ENCODE measurements at regions of chr5 and their contacts with region 1.

Region 1: DNA sequence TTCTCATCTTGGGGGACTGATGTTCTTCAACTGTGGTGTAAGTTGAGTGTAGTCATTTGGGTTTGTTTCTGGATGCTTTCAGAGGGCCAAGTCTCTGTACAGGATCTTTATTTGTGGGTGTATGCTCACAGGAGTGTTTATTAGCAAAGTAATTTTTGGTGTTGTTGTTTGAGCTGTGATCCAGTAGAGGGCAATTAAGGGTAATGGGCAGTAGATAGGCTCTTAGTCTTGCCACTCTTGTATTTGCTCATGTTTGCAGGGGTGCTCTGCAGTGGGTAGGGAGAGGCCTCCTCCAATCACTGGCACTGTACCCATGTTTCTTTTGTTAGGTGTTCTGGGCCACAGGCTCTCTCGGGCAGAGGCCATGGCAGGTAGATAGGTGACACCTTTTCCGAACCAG is 45.9 kb upstream of the ITGA2 start:
- DNase-seq: peak; percentile 31
- H3K4me3 ChIP-seq: no peak overlapping the region
- H3K27ac ChIP-seq: no peak overlapping the region
- H3K4me1 ChIP-seq: peaks cover 26% of the 10 kb centered on the region
- H3K27me3 ChIP-seq: no peaks in the 10 kb centered on the region
- CTCF ChIP-seq: peak; percentile 23 to 44
- POLR2A ChIP-seq: no peak

Region 2: DNA sequence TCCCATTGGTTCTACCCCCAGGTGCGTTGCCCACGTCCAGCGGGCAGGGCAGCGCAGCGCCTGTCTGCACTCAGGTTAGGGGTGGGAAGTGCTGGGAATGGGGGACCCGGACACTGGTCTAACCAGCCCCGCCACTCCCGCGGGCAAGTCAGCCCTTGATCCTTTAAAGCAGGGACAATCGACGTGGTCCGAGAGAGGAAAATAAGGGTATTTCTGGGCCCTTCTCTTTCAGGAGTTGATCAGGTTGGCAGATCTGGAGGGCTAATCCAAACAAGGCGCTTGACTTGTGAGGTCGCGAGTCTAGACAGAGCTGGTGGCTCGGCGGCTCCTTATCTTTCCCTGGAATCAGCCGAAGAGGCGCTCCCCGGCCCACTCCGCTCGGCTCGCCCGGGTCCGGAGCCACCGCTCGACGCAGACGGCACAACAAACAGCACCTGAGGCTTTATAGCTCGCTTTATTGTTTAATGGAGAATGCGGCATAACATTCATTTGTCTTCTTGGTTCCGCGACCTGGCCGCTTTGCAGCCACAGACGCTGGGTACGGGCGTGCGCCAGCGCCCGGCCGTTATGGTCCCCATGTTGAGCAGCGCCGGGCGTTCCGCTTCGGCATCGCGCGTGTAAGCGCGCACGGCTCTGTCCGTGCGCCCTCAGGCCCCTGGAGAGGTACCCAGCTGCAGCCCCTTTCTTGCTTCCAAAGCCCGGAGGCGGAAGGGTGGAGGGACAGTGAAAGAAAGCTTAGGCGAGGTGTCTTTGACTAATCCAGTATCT is 1544.2 kb before region 1 on chr5:
- CTCF ChIA-PET with region 1: no interaction called
- POLR2A ChIA-PET with region 1: no interaction called
- dilution Hi-C with region 1: no loop called
- intact Hi-C with region 1: no loop called
- DNase-seq: no peak
- H3K4me3 ChIP-seq: peak overlapping the region in 1 of 3 experiments; percentile 7
- H3K27ac ChIP-seq: no peak overlapping the region
- H3K4me1 ChIP-seq: no peaks in the 10 kb centered on the region
- H3K27me3 ChIP-seq: peaks cover 21 to 29% of the 10 kb centered on the region in 2 experiments
- CTCF ChIP-seq: no peak
- POLR2A ChIP-seq: no peak

Region 3: DNA sequence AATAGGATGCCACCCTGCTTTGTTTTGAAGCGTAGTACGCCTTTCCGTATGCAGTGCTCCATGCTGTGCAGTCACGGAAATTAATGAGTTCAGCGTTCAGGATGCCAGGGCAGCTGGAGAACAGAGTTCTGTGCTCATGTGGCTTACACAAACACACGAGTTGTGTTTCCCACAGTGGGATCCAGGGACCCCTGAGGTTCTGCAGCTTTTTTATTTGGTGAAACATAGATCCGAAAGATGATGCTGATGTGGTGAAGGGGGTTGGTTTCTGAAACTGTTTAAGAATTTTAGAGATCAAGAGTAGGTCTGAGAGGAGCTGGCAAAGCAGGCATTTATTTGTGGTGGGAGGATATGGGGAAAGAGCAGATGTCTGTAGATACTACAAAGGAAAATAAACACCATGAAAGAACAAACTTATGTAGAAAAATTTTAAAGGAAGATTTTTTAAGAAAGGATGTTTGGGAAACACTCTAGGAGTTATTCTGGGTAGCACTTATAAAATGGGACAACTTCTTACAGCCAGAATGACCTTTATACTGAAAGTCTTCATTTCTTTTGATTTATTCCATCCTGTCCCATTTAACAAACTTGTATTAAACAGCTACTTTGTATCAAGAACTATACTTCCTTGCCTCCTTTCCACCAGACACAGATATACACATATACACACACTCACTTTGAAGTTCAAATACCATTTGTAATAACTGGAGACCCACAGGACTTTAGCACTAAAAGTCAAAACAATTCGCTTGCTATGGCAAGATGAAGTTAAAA is 102.8 kb before region 1 on chr5:
- CTCF ChIA-PET with region 1: no interaction called
- POLR2A ChIA-PET with region 1: no interaction called
- dilution Hi-C with region 1: no loop called
- intact Hi-C with region 1: no loop called
- DNase-seq: peak; percentile 89
- H3K4me3 ChIP-seq: no peak overlapping the region
- H3K27ac ChIP-seq: no peak overlapping the region
- H3K4me1 ChIP-seq: peaks cover 26% of the 10 kb centered on the region
- H3K27me3 ChIP-seq: no peaks in the 10 kb centered on the region
- CTCF ChIP-seq: no peak
- POLR2A ChIP-seq: no peak

Region 4: DNA sequence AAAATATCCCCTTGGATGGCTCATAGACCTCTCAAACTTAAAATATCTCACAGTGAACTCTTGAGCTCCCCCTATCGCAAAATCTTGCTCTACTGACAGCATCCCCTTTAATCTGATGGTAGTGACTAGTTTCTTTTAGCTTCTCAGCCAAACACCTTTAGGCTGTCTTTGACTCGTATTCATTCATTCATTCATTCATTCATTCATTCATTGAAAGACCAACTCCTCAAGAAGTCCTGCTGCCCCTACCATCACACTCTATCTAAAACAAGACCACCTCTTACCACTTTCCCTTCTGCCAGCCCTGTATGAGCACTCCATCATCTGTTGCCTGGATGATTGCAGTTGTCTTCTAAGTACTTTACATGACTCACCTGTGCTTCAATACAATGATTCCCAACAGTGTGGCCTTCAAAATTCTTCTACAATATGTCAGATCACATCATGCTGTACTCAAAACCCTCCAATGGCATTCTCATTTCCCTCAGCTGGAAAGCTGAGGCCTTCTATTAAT is 92.6 kb after region 1 on chr5:
- CTCF ChIA-PET with region 1: interaction called, 46 read pairs
- POLR2A ChIA-PET with region 1: no interaction called
- dilution Hi-C with region 1: no loop called
- intact Hi-C with region 1: loop called (anchors 1 kb)
- DNase-seq: peak; percentile 28
- H3K4me3 ChIP-seq: no peak overlapping the region
- H3K27ac ChIP-seq: no peak overlapping the region
- H3K4me1 ChIP-seq: peaks cover 52% of the 10 kb centered on the region
- H3K27me3 ChIP-seq: no peaks in the 10 kb centered on the region
- CTCF ChIP-seq: peak; percentile 20 to 31
- POLR2A ChIP-seq: no peak

Region 5: DNA sequence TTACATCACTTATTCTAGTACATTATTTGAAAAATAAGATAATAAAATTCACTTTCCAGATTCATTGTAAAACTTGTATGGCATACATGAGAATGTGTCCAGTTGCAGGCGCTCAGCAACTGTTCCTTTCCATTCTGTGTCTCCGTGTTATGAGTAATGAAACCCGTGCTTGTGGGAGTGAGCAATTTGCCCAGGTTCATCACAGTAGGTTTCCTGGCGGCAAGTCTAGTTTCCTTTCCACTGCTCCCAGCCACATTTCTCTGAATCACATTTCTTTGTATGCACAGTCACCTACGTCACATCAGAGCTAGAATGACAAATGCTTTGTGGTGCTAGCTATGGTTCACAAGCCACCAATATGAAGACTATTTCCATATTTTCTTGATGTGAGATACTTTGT is 126.3 kb after region 1 on chr5:
- CTCF ChIA-PET with region 1: interaction called, 50 read pairs
- POLR2A ChIA-PET with region 1: no interaction called
- dilution Hi-C with region 1: no loop called
- intact Hi-C with region 1: loop called (anchors 1 kb)
- DNase-seq: peak; percentile 94
- H3K4me3 ChIP-seq: no peak overlapping the region
- H3K27ac ChIP-seq: peak overlapping the region; percentile 89
- H3K4me1 ChIP-seq: peaks cover 14% of the 10 kb centered on the region
- H3K27me3 ChIP-seq: no peaks in the 10 kb centered on the region
- CTCF ChIP-seq: no peak
- POLR2A ChIP-seq: no peak

Region 6: DNA sequence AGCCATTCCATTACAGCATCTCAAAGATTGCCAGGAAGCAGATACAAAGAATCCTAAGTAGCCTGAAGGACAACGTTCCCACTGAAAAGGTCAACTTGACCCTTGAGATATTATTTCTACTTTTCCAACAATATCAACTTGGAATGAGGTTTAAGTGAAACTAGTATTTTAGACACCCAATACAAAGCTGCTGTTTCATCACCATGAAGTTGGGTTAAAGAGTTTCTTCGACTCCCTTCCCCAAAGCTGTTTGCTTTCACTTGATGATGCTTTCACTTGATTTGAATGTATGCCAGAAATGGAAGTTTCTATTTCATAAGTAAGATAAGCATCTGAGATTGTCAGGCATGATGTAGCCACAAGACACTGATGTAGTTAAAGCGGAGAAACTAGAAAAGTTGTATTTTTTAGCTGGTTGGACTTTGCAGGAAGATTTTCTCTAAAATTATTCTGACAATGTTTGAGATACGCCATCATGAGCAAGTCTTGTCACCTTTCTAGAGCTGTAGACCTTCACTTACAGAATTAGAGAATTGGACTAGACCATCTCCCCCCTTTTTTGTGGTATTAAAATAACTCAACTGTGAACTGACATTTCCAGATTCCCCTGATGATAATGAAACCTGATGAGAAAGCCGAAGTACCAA is 146.2 kb after region 1 on chr5:
- CTCF ChIA-PET with region 1: interaction called, 148 read pairs
- POLR2A ChIA-PET with region 1: no interaction called
- dilution Hi-C with region 1: no loop called
- intact Hi-C with region 1: loop called (anchors 1 kb)
- DNase-seq: no peak
- H3K4me3 ChIP-seq: no peak overlapping the region
- H3K27ac ChIP-seq: no peak overlapping the region
- H3K4me1 ChIP-seq: peaks cover 16% of the 10 kb centered on the region
- H3K27me3 ChIP-seq: no peaks in the 10 kb centered on the region
- CTCF ChIP-seq: no peak
- POLR2A ChIP-seq: no peak

Region 7: GRCh38 chr5:53095931-53096525 is 152.7 kb after region 1 on chr5:
- CTCF ChIA-PET with region 1: interaction called, 148 read pairs
- POLR2A ChIA-PET with region 1: no interaction called
- dilution Hi-C with region 1: no loop called
- intact Hi-C with region 1: loop called (anchors 1 kb)
- DNase-seq: peak; percentile 85
- H3K4me3 ChIP-seq: no peak overlapping the region
- H3K27ac ChIP-seq: no peak overlapping the region
- H3K4me1 ChIP-seq: peaks cover 10% of the 10 kb centered on the region
- H3K27me3 ChIP-seq: no peaks in the 10 kb centered on the region
- CTCF ChIP-seq: peak; percentile 54 to 63
- POLR2A ChIP-seq: no peak

Region 8: GRCh38 chr5:53114988-53115387 is 171.7 kb after region 1 on chr5:
- CTCF ChIA-PET with region 1: interaction called, 53 read pairs
- POLR2A ChIA-PET with region 1: interaction called, 3 read pairs
- dilution Hi-C with region 1: no loop called
- intact Hi-C with region 1: no loop called
- DNase-seq: peak; percentile 51
- H3K4me3 ChIP-seq: no peak overlapping the region
- H3K27ac ChIP-seq: no peak overlapping the region
- H3K4me1 ChIP-seq: peaks cover 4% of the 10 kb centered on the region
- H3K27me3 ChIP-seq: peaks cover 0 to 2% of the 10 kb centered on the region in 2 experiments
- CTCF ChIP-seq: peak in 1 of 2 donors; percentile 31
- POLR2A ChIP-seq: no peak

Region 9: GRCh38 chr5:53856506-53856905 is 913.2 kb after region 1 on chr5:
- CTCF ChIA-PET with region 1: no interaction called
- POLR2A ChIA-PET with region 1: no interaction called
- dilution Hi-C with region 1: no loop called
- intact Hi-C with region 1: no loop called
- DNase-seq: no peak
- H3K4me3 ChIP-seq: no peak overlapping the region
- H3K27ac ChIP-seq: no peak overlapping the region
- H3K4me1 ChIP-seq: no peaks in the 10 kb centered on the region
- H3K27me3 ChIP-seq: no peaks in the 10 kb centered on the region
- CTCF ChIP-seq: no peak
- POLR2A ChIP-seq: no peak